OCI-LY7 (cell line): ENCODE measurements at regions of chr7 and their contacts with region 1.

Region 1: DNA sequence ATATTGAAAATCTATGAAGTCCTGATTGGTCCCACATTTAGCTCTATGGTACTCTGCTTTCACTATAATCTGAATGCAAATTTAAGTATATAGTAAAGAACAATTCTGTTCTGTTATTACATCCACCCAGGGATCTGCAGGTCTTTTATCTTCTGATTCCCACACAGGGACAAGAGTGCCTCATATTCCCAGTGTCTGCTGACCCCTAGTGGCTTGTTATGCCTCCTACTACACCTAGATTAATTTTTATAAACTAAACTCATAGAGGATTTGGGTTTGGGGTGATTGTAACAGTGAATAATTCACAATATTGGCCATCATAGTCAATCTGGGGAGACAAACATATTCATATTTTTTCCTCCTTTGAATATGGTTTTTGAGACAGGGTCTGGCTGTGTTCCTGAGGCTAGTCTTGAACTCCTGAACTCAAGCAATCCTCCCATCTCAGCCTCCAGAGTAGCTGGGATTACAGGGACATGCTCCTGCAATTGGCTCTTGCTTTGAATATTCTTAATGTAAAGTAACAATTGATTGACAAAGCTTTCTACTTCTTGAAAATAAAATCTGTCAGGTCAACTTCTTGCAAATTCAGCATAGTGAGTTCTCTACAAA is 282.1 kb downstream of the KCND2 start:
- DNase-seq: peak; percentile 39
- H3K4me3 ChIP-seq: no peak overlapping the region
- H3K27ac ChIP-seq: no peak overlapping the region
- H3K4me1 ChIP-seq: no peaks in the 10 kb centered on the region
- CTCF ChIP-seq: peak; percentile 85

Region 2: DNA sequence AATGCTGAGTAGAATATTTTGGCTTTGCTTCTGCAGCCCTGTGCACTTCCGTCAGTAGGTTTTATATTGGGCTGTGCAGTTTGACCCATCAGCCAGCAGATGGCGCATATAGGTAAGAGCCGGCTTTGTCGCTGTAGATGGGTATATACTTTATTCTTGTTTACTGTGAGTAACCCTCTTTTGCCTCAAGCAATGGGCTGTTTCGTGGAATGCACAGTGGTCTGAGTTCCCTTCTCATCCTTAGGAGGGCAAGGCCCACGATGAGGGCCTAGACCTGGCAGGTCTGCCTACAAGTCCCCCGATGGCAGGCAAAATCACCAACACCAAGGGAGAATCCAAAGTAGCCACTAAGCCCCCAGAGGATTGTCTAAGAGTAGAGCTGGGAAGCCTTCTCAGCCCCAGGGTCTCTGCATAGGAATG is 1285.0 kb before region 1 on chr7:
- CTCF ChIA-PET with region 1: no interaction called
- POLR2A ChIA-PET with region 1: no interaction called
- intact Hi-C with region 1: loop called (anchors 5 kb)
- DNase-seq: peak; percentile 73
- H3K4me3 ChIP-seq: no peak overlapping the region
- H3K27ac ChIP-seq: no peak overlapping the region
- H3K4me1 ChIP-seq: no peaks in the 10 kb centered on the region
- CTCF ChIP-seq: peak; percentile 90

Region 3: DNA sequence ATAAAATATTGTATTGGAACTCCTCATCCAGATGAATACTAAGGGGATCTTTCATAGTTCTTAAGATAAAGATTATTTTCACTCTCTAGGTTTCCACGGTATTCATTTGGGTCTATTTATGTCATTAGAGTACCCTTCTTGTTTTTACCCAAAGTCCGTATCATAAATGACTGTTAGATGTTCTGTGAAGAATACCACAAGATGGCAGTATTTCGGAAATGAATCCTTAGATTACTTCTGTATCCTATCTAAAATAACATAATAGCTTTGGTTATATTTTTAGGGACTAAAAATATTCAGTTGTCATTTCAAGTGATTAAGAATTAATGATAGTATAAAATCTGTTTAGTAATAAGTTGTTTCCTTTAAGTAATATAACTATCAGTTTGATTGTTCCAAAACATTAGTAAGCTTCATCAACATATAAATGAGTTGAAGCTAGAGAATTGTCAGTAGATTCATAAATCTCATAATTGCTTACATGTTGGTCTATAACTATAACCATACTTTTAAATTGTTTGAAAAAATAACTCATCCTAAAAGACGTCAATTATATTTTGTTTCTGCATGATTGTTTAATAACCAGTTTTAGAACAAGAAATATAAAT is 619.5 kb before region 1 on chr7:
- CTCF ChIA-PET with region 1: no interaction called
- POLR2A ChIA-PET with region 1: no interaction called
- intact Hi-C with region 1: loop called (anchors 2 kb)
- DNase-seq: peak; percentile 30
- H3K4me3 ChIP-seq: no peak overlapping the region
- H3K27ac ChIP-seq: no peak overlapping the region
- H3K4me1 ChIP-seq: no peaks in the 10 kb centered on the region
- CTCF ChIP-seq: peak; percentile 81

Region 4: DNA sequence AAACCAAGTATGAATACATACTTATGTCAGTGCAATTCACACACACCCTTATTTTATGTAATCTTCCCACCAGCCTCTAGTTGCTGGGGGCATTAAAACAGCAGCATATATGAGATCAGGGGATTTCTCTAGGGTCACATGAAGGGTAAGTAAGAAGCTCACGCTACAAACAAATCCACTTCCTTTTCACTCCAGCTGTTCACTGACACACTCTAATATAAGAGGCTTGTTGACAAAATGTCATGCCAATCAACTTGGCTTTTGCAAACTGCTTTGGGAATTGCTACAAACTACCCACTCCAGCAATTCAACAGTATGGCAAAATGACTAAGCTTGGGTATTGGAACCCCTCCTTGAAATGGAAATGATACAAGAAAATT is 830.7 kb after region 1 on chr7:
- CTCF ChIA-PET with region 1: no interaction called
- POLR2A ChIA-PET with region 1: no interaction called
- intact Hi-C with region 1: no loop called
- DNase-seq: peak; percentile 38
- H3K4me3 ChIP-seq: no peak overlapping the region
- H3K27ac ChIP-seq: no peak overlapping the region
- H3K4me1 ChIP-seq: peaks cover 50% of the 10 kb centered on the region
- CTCF ChIP-seq: no peak